Activated B cell treated with CpG ODN at 0.5 μM for 24 hours (primary cell): ENCODE measurements at regions of chr19 and their contacts with region 1.

Region 1: DNA sequence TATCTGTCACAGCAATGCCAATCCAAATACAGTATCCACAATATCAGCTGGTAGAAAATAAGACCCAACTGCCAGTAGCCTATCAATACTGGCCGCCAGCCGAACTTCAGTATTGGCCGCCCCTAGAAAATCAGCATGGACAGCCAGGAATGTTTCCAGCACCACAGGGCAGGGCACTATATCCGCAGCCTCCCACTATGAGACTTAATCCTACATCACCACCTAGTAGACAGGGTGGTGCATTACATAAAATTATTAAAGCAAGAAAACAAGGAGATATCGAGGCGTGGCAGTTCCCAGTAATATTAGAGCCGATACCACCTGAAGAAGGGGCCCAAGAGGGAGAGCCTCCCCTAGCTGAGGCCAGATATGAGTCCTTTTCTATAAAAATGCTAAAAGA is 111.3 kb downstream of the ZNF486 start:
- DNase-seq: no peak
- ATAC-seq: no peak
- H3K4me3 Mint-ChIP-seq: no peak overlapping the region
- H3K27ac Mint-ChIP-seq: no peak overlapping the region
- H3K4me1 Mint-ChIP-seq: peaks cover 29% of the 10 kb centered on the region
- H3K27me3 Mint-ChIP-seq: no peaks in the 10 kb centered on the region
- CTCF ChIP-seq: no peak

Region 2: GRCh38 chr19:19956434-19957075 is 321.8 kb before region 1 on chr19:
- CTCF ChIA-PET with region 1: no interaction called
- POLR2A ChIA-PET with region 1: no interaction called
- intact Hi-C with region 1: loop called (anchors 1 kb)
- DNase-seq: no peak
- ATAC-seq: no peak
- H3K4me3 Mint-ChIP-seq: no peak overlapping the region
- H3K27ac Mint-ChIP-seq: no peak overlapping the region
- H3K4me1 Mint-ChIP-seq: peaks cover 7% of the 10 kb centered on the region
- H3K27me3 Mint-ChIP-seq: no peaks in the 10 kb centered on the region
- CTCF ChIP-seq: no peak

Region 3: GRCh38 chr19:19997656-19998268 is 280.6 kb before region 1 on chr19:
- CTCF ChIA-PET with region 1: interaction called, 26 read pairs
- POLR2A ChIA-PET with region 1: no interaction called
- intact Hi-C with region 1: loop called (anchors 1 kb)
- DNase-seq: peak; percentile 29
- ATAC-seq: peak; percentile 64
- H3K4me3 Mint-ChIP-seq: no peak overlapping the region
- H3K27ac Mint-ChIP-seq: no peak overlapping the region
- H3K4me1 Mint-ChIP-seq: no peaks in the 10 kb centered on the region
- H3K27me3 Mint-ChIP-seq: no peaks in the 10 kb centered on the region
- CTCF ChIP-seq: peak; percentile 45

Region 4: GRCh38 chr19:20247016-20247683 is 31.2 kb before region 1 on chr19:
- CTCF ChIA-PET with region 1: no interaction called
- POLR2A ChIA-PET with region 1: no interaction called
- intact Hi-C with region 1: loop called (anchors 1 kb)
- DNase-seq: no peak
- ATAC-seq: no peak
- H3K4me3 Mint-ChIP-seq: no peak overlapping the region
- H3K27ac Mint-ChIP-seq: no peak overlapping the region
- H3K4me1 Mint-ChIP-seq: peaks cover 17% of the 10 kb centered on the region
- H3K27me3 Mint-ChIP-seq: no peaks in the 10 kb centered on the region
- CTCF ChIP-seq: no peak

Region 5: GRCh38 chr19:21221693-21222092 is 943.4 kb after region 1 on chr19:
- CTCF ChIA-PET with region 1: no interaction called
- POLR2A ChIA-PET with region 1: no interaction called
- intact Hi-C with region 1: no loop called
- DNase-seq: no peak
- ATAC-seq: no peak
- H3K4me3 Mint-ChIP-seq: no peak overlapping the region
- H3K27ac Mint-ChIP-seq: no peak overlapping the region
- H3K4me1 Mint-ChIP-seq: no peaks in the 10 kb centered on the region
- H3K27me3 Mint-ChIP-seq: no peaks in the 10 kb centered on the region
- CTCF ChIP-seq: no peak